CD4-positive, alpha-beta memory T cell (primary cell): ENCODE measurements at regions of chr22 and their contacts with region 1.

Region 1: DNA sequence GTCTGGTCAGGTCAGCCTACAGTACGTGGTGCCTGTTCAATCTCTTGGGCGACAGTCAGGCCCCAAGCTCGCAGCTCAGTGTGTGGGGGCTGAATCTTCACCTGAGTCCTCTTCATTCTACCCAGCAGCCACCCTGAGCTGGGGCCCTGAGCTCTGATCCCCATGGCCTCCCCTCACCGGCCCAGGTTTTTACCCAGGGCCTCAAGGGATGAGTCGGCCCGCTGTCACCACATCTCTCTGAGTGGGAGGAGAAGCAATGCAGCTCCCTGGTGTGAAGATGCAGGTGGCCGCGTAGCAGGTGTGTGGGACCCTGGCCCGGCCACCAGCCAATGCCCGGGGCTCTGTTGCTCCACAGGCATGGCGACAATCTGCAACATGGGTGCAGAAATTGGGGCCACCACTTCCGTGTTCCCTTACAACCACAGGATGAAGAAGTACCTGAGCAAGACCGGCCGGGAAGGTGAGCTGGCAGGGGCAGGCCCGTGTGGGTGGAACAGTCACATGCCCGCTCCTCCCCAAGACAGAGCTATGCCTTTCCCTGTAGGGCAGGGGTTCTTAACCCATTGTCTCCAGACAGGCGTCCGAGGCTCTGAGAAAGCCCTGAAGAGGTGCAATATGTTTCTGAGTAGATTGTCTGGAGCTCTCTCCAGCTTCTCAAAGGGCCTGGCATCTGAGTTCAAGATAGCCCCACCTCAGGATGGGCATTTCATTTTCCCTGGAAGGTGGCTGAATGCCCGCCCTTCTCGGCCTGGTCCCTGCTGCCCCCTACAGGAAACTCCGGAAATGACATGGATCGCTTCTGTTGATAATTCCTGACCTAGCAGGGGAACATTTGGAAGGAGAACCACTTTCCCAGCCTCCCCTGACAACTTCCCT is 26.9 kb downstream of the POLR3H start:
- DNase-seq: peak in 3 of 5 donors; percentile 18 to 36 (median 22)
- H3K4me3 ChIP-seq: no peak overlapping the region
- H3K4me3 Mint-ChIP-seq: no peak overlapping the region
- H3K27ac ChIP-seq: no peak overlapping the region
- H3K27ac Mint-ChIP-seq: peak overlapping the region in 1 of 7 donors; percentile 29
- H3K4me1 ChIP-seq: no peaks in the 10 kb centered on the region
- H3K4me1 Mint-ChIP-seq: peaks cover 0 to 1% (median 0%) of the 10 kb centered on the region in 4 donors
- H3K27me3 ChIP-seq: no peaks in the 10 kb centered on the region
- H3K27me3 Mint-ChIP-seq: no peaks in the 10 kb centered on the region

Region 2: GRCh38 chr22:41501209-41501608 is 16.2 kb before region 1 on chr22:
- CTCF ChIA-PET with region 1: interaction called, 18 read pairs
- POLR2A ChIA-PET with region 1: no interaction called
- intact Hi-C with region 1: no loop called
- DNase-seq: peak in 1 of 5 donors; percentile 10
- H3K4me3 ChIP-seq: no peak overlapping the region
- H3K4me3 Mint-ChIP-seq: no peak overlapping the region
- H3K27ac ChIP-seq: no peak overlapping the region
- H3K27ac Mint-ChIP-seq: peak overlapping the region in 1 of 7 donors; percentile 37
- H3K4me1 ChIP-seq: no peaks in the 10 kb centered on the region
- H3K4me1 Mint-ChIP-seq: peaks cover 0 to 7% (median 0%) of the 10 kb centered on the region in 4 donors
- H3K27me3 ChIP-seq: no peaks in the 10 kb centered on the region
- H3K27me3 Mint-ChIP-seq: no peaks in the 10 kb centered on the region

Region 3: DNA sequence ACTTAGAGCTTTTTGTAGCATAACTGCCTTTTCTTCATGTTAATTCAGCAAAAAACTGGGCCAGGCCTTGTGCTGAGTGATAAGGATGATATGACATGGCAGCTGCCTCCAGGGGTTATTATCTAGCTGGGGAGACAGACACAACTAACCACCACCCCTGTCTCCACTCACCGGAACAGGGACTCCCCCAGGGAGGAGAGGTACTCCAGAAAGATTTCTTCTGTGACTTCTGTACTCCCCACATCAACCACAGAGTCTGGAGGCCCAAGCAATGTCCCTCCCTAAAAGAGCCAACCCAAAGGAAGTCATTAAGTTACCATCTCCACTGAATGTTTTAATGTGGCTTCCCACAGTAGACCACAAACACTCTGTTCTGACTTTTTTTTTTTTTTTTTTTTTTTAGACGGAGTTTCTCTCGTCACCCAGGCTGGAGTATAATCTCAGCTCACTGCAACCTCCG is 86.5 kb after region 1 on chr22:
- CTCF ChIA-PET with region 1: no interaction called
- POLR2A ChIA-PET with region 1: no interaction called
- intact Hi-C with region 1: no loop called
- DNase-seq: peak; percentile 81 to 93 (median 83)
- H3K4me3 ChIP-seq: no peak overlapping the region
- H3K4me3 Mint-ChIP-seq: peak overlapping the region; percentile 43 to 79 (median 58)
- H3K27ac ChIP-seq: no peak overlapping the region
- H3K27ac Mint-ChIP-seq: peak overlapping the region; percentile 42 to 95 (median 85)
- H3K4me1 ChIP-seq: peaks cover 28% of the 10 kb centered on the region
- H3K4me1 Mint-ChIP-seq: peaks cover 18 to 38% (median 23%) of the 10 kb centered on the region in 4 donors
- H3K27me3 ChIP-seq: no peaks in the 10 kb centered on the region
- H3K27me3 Mint-ChIP-seq: peaks cover 0 to 2% of the 10 kb centered on the region in 2 donors